HepG2 (cell line): ENCODE measurements at regions of chr1 and their contacts with region 1.

Region 1: GRCh38 chr1:29181413-29182225 is at the start of gene SRSF4:
- DNase-seq: peak; percentile 97
- ATAC-seq: peak; percentile 87
- H3K4me3 ChIP-seq: peak within 1 kb of the TSS; percentile 90 to 99 (median 98)
- H3K27ac ChIP-seq: peak within 1 kb of the TSS; percentile 99
- H3K4me1 ChIP-seq: peaks cover 65% of the 10 kb centered on the region
- H3K27me3 ChIP-seq: no peaks in the 10 kb centered on the region; a peak in 1 of 5 replicates
- CTCF ChIP-seq: peak; percentile 99
- EP300 ChIP-seq: peak in 1 of 2 experiments; percentile 55; a peak in 2 of 4 replicates
- POLR2A ChIP-seq: peak; percentile 72 to 84
- RAD21 ChIP-seq: peak; percentile 88
- total RNA-seq, gene SRSF4: 43.3 and 50.9 TPM in 2 replicates

Region 2: DNA sequence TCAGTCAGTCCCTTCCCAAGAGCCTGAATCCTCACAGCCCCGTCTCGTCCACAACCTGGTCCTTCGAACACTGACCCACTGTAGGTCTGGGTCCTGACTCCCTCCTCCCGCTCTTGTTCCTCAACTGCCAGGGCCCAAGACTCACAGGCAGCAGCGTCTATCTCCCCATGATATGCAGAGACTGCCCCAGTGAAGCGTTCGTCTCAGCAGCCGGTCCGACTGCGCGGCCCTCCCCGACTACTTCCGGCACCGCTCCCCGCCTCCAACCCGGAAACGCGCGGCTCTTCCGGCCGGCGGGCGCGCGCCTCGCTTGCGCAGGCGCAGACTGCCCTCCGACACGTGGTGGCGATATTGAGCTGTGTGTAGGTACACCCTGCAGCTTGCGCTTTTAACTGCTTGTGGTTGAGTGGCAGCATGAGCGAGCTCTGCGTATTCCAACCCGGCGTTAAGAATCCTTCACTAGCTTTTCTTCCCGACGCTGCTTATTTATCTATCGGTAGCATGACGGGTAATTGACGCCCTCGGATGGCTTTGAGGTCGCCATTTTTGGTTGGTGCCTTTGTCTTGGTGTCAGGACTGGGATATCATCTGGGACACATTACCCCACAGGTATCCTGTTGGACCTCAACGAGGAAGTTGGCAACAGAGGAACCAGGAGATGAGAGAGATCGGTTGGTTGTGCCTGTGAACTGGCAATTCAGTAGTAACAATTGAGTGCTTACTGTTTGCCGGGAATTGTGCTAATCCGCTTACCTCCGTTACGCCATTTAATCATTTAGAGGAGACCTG is 538.6 kb before region 1 on chr1 and contains the start of gene TAF12:
- CTCF ChIA-PET with region 1: no interaction called
- POLR2A ChIA-PET with region 1: interaction called, 16 read pairs
- in situ Hi-C with region 1: no loop called
- intact Hi-C with region 1: loop called (anchors 10 kb)
- DNase-seq: peak; percentile 90
- ATAC-seq: peak; percentile 90
- H3K4me3 ChIP-seq: peak within 1 kb of the TSS; percentile 90 to 99 (median 91)
- H3K27ac ChIP-seq: peak within 1 kb of the TSS; percentile 87
- H3K4me1 ChIP-seq: peaks cover 56% of the 10 kb centered on the region
- H3K27me3 ChIP-seq: no peaks in the 10 kb centered on the region; a peak in 1 of 5 replicates
- CTCF ChIP-seq: peak; percentile 88
- EP300 ChIP-seq: peak in 1 of 2 experiments; percentile 28; a peak in 1 of 4 replicates
- POLR2A ChIP-seq: peak; percentile 97 to 99
- RAD21 ChIP-seq: peak; percentile 60
- total RNA-seq, gene TAF12: 17.1 and 24.2 TPM in 2 replicates

Region 3: DNA sequence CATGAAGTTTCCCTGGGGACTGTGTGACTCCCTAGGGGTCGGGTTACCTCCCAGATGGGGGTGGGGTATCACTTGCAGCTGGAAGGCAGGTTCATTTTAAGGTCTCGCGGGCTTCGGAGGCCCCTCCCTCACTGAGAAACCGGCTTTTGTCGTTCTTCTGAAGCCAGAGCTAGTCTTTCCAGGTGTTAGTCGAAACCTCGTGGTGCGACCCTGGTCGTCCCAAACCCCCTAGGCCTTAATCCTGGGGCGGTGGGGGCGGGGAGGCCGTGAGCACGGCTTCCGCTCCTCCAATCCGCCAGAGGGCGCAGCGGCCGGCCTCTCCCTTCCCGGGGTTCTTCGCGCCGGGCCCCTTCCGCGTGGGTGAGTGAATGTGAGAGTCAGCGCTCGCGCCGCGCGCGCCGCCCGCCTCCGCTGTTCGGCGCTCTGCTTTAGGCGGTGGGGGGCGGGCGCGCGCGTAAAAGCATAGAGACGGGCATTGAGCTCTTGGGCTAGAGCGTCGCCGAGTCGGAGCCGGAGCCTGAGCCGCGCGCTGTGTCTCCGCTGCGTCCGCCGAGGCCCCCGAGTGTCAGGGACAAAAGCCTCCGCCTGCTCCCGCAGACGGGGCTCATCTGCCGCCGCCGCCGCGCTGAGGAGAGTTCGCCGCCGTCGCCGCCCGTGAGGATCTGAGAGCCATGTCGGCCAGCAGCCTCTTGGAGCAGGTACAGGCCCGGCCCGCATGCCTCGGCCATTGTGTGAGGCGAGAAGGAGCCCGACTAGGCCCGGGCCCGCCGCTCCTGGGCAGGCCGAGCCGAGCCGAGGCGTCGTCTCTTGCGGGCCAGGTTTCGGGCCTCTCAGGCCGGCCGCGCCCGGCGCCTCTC is 444.9 kb before region 1 on chr1 and contains the start of gene YTHDF2:
- CTCF ChIA-PET with region 1: no interaction called
- POLR2A ChIA-PET with region 1: interaction called, 14 read pairs
- in situ Hi-C with region 1: no loop called
- intact Hi-C with region 1: no loop called
- DNase-seq: peak; percentile 96
- ATAC-seq: peak; percentile 88
- H3K4me3 ChIP-seq: peak within 1 kb of the TSS; percentile 75 to 95 (median 89)
- H3K27ac ChIP-seq: peak within 1 kb of the TSS; percentile 97
- H3K4me1 ChIP-seq: peaks cover 66% of the 10 kb centered on the region
- H3K27me3 ChIP-seq: no peaks in the 10 kb centered on the region; a peak in 1 of 5 replicates
- CTCF ChIP-seq: peak; percentile 95
- EP300 ChIP-seq: peak; percentile 31 to 36; a peak in 2 of 4 replicates
- POLR2A ChIP-seq: peak; percentile 57 to 78
- RAD21 ChIP-seq: peak; percentile 69
- total RNA-seq, gene YTHDF2: 59.6 and 84.7 TPM in 2 replicates

Region 4: DNA sequence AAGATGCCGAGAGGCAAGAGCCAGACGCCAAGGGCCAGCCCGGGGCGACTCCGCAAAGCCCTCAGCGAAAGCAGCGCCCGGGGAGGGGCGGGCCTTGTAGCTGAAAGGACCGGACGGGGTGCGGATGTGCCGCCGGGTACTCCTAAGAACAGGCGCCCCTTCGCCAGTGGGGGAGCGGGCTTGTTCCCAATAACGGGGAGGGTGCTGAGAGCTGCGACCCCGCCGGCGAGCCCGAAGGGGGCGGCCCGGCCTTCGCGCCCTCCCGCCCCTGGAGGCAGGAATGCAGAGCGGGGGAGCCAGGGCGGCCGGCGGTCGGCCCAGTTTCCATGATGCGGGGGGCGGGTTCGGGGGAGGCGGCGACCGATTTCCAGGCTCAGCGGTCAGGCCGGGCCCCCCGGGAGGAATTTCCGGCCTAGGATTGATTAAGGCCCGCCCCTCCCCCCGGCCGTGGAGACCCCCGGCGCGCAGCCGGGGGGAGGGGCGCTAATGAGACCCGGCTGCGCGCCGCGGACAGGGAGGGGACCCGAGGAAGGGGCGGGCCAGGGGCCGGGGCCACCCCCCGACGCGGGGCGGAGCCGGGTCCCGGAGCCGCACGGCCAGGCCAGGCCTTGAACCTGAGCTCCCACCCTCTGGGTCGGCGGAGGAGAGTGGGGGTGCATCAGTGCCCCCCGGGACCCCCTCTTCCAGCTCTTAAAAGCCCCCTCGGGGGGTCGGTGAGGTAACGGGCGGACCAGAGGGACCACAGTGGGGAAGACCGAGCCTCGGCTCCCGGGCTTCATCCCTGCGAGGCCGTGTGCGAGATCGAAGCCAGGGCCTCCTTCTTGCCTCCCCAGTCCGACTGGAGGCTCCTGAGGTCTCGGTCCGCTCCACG is 57.0 kb before region 1 on chr1:
- CTCF ChIA-PET with region 1: no interaction called
- POLR2A ChIA-PET with region 1: interaction called, 24 read pairs
- in situ Hi-C with region 1: no loop called
- intact Hi-C with region 1: no loop called
- DNase-seq: peak; percentile 56
- ATAC-seq: peak; percentile 74
- H3K4me3 ChIP-seq: peak overlapping the region; percentile 76 to 89 (median 85)
- H3K27ac ChIP-seq: peak overlapping the region; percentile 13
- H3K4me1 ChIP-seq: peaks cover 22% of the 10 kb centered on the region
- H3K27me3 ChIP-seq: peaks cover 2 to 11% of the 10 kb centered on the region in 2 experiments; a peak in 2 of 5 replicates
- CTCF ChIP-seq: peak; percentile 66
- EP300 ChIP-seq: 0 out of 4 replicates have a peak, but pooled peaks of 1 of the 2 experiments have one; percentile 14
- POLR2A ChIP-seq: peak; percentile 21 to 27; a peak in 2 of 4 replicates
- RAD21 ChIP-seq: no peak

Region 5: GRCh38 chr1:29166291-29166878 is 15.2 kb before region 1 on chr1:
- CTCF ChIA-PET with region 1: no interaction called
- POLR2A ChIA-PET with region 1: interaction called, 13 read pairs
- in situ Hi-C with region 1: no loop called
- intact Hi-C with region 1: no loop called
- DNase-seq: peak; percentile 49
- ATAC-seq: peak; percentile 94
- H3K4me3 ChIP-seq: no peak overlapping the region
- H3K27ac ChIP-seq: peak overlapping the region; percentile 69
- H3K4me1 ChIP-seq: peaks cover 52% of the 10 kb centered on the region
- H3K27me3 ChIP-seq: no peaks in the 10 kb centered on the region
- CTCF ChIP-seq: no peak
- EP300 ChIP-seq: no peak
- POLR2A ChIP-seq: peak in 1 of 2 experiments; percentile 37; a peak in 1 of 4 replicates
- RAD21 ChIP-seq: no peak

Region 6: DNA sequence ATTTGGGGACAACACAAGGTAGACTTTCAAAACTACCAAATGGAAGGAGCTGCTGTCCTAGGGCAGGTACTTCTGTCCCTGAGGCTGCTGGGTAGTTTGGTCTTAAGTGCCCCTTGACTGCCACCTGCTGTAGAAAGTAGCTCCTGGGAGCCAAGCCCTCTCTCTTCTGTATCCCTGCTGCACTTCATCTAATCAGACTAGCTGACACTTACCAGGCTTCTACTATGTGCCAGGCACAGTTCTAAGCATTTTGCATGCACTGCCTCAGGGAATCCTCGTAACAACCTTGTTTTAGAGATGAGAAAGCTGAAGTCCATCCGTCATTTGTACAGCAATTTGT is 15.9 kb after region 1 on chr1:
- CTCF ChIA-PET with region 1: no interaction called
- POLR2A ChIA-PET with region 1: interaction called, 30 read pairs
- in situ Hi-C with region 1: no loop called
- intact Hi-C with region 1: no loop called
- DNase-seq: peak; percentile 60
- ATAC-seq: peak; percentile 92
- H3K4me3 ChIP-seq: no peak overlapping the region
- H3K27ac ChIP-seq: no peak overlapping the region
- H3K4me1 ChIP-seq: peaks cover 12% of the 10 kb centered on the region
- H3K27me3 ChIP-seq: no peaks in the 10 kb centered on the region
- CTCF ChIP-seq: peak; percentile 77
- EP300 ChIP-seq: no peak
- POLR2A ChIP-seq: no peak
- RAD21 ChIP-seq: peak; percentile 66; the same call in 1 of the 2 replicates